ENCODE measurements at regions of chr10 and their contacts with region 1.

Region 1: DNA sequence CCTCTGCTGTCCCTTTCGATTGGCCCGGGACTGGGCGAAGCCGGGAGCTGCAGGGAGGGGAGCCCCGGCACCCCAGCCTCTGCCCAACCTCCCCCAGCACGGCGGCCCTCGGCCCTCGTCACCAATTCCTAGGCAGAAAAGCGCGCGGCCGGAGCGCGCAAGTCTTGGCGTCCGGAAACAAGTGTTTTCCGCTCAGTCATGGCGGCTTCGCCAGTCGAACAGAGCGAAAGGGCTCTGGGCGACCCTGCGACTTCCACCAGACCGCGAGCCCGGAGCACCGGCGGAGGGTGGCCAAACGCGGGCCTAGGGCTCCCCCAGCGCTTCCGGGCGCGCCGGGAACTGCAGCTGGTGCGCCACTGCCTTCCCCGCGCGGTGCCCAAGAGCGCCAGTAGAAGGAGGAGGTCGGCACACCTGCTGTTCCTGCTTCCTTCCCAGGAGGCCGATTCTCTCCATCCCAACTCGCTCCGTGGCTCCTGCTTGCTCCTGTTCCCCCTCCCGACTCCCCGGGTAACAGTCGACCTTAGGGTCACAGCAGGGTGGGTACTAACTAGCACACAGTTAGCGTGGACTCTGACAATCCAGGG is 729.9 kb downstream of the ZWINT start:
- DNase-seq: peak; percentile 35 to 80
- H3K4me3 ChIP-seq: peak overlapping the region; percentile 53; the same call in 1 of the 2 replicates
- H3K27ac ChIP-seq: no peak overlapping the region
- H3K4me1 ChIP-seq: no peaks in the 10 kb centered on the region; the same call in 1 of the 2 replicates
- H3K27me3 ChIP-seq: no peaks in the 10 kb centered on the region
- CTCF ChIP-seq: peak; percentile 77

Region 2: DNA sequence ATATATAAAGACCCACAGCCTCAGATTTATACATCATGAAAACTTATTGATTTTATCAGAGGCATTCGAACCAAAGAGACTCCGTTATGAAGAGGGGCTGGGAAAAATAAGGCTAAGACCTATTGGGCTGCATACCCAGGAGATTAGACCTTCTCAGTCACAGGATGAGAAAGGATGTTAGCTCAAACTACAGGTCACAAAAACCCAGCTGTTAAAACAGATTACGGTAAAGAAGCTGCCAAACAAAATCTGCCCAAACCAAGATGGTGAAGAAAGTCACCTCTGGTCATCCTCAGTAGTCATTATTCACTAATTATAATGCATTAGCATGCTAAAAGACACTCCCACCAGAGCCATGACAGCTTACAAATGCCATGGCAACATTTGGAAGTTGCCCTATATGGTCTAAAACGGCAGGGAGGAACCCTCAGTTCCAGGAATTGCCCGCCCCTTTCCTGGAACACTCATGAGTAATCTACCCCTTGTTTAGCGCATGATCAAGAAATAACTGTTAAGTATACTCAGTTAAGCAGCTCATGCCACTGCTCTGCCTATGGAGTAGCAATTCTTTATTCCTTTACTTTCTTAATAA is 467.7 kb before region 1 on chr10:
- CTCF ChIA-PET with region 1: no interaction called
- POLR2A ChIA-PET with region 1: no interaction called
- intact Hi-C with region 1: no loop called
- DNase-seq: no peak
- H3K4me3 ChIP-seq: no peak overlapping the region
- H3K27ac ChIP-seq: no peak overlapping the region
- H3K4me1 ChIP-seq: no peaks in the 10 kb centered on the region
- H3K27me3 ChIP-seq: no peaks in the 10 kb centered on the region
- CTCF ChIP-seq: no peak

Region 3: GRCh38 chr10:55263327-55263726 is 367.8 kb before region 1 on chr10:
- CTCF ChIA-PET with region 1: no interaction called
- POLR2A ChIA-PET with region 1: no interaction called
- intact Hi-C with region 1: loop called (anchors 10 kb)
- DNase-seq: no peak
- H3K4me3 ChIP-seq: no peak overlapping the region
- H3K27ac ChIP-seq: no peak overlapping the region
- H3K4me1 ChIP-seq: no peaks in the 10 kb centered on the region
- H3K27me3 ChIP-seq: no peaks in the 10 kb centered on the region
- CTCF ChIP-seq: no peak

Region 4: GRCh38 chr10:55734112-55734511 is 102.9 kb after region 1 on chr10:
- CTCF ChIA-PET with region 1: no interaction called
- POLR2A ChIA-PET with region 1: no interaction called
- intact Hi-C with region 1: no loop called
- DNase-seq: no peak
- H3K4me3 ChIP-seq: no peak overlapping the region
- H3K27ac ChIP-seq: no peak overlapping the region
- H3K4me1 ChIP-seq: no peaks in the 10 kb centered on the region
- H3K27me3 ChIP-seq: no peaks in the 10 kb centered on the region
- CTCF ChIP-seq: no peak

Measured in PC-9 (cell line).